Endothelial cell of umbilical vein (primary cell): ENCODE measurements at regions of chr4 and their contacts with region 1.

Region 1: DNA sequence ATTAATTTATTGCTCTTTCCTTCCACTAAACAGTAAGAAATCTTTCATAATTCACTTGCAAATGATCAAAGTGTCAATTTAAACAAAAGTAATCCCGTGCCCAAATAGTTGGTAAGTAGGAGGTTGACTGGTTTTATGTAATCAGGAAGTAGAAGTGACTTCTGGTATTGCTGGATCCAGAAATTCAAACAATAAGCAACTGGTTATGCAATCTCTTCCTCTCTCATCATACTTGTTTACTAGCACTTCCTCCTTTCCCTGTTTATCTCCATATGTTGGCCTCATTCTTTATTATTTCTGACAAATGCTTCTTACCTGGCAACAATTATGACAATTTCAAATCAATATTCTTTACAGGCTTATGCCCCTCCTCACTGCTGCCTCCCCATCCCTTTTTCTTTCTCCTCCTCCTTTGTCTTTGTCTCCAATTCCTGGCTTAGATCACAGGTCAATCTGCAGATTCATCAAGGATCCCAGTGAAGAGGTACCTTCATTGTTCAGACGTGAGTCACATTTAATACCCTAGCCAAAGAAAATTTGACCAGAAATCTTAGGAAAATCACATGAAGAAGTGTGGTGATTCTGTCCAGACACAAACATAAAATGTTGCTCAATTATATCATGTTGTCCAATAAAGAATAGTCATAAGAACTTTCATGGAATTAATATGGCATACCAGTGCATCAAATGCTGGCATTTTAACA is 323.2 kb upstream of the PCDH7 start:
- DNase-seq: peak; percentile 73
- H3K4me3 ChIP-seq: no peak overlapping the region
- H3K27ac ChIP-seq: peak overlapping the region; percentile 63
- H3K4me1 ChIP-seq: peaks cover 26% of the 10 kb centered on the region
- H3K27me3 ChIP-seq: no peaks in the 10 kb centered on the region
- CTCF ChIP-seq: no peak
- POLR2A ChIP-seq: no peak

Region 2: DNA sequence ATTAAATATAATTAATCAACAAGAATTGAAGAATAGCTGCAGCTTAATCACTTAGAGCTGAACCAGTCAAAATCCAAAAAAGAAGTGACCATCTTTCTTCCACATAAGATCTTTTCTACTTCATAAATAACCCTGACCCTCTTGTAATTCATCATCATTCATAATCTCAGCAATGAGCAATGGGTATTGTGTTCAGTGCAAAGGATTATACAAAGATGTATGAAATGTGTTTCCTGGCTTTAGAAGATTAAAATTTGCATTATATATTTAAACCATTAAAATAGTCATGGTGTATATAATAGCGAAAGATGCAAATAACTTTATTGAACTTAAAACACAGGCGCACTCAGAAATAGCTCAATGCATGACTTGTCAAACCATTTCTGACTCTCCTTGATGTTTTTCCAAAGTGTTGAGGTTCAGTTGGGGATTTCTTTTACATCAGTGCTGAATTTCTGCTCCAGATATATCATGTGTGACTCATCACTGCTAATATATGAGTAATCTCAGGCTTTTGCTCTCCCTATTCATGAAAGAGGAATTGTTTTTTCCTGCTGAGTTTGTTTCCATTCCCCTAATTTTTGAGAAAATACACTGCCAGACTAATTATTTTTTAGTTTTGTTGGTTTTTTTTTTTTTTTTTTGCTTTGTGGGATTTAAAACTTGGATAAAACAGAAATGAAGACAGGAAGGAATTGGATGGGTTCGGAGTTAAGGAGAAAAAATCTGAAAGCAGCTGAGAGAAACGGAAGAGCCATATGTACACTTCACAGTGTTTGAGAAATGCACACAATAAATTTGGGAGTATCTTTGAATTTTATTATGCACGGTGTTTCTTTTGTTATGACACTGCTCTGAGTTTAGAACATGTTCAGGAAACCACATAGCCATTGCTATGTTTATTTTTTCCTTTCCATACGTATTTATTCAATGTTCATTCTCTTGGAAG is 33.2 kb after region 1 on chr4:
- CTCF ChIA-PET with region 1: no interaction called
- POLR2A ChIA-PET with region 1: no interaction called
- dilution Hi-C with region 1: no loop called
- intact Hi-C with region 1: loop called (anchors 5 kb)
- DNase-seq: peak; percentile 83
- H3K4me3 ChIP-seq: no peak overlapping the region
- H3K27ac ChIP-seq: peak overlapping the region; percentile 36
- H3K4me1 ChIP-seq: peaks cover 22% of the 10 kb centered on the region
- H3K27me3 ChIP-seq: no peaks in the 10 kb centered on the region
- CTCF ChIP-seq: no peak
- POLR2A ChIP-seq: no peak

Region 3: GRCh38 chr4:30537456-30537855 is 140.5 kb after region 1 on chr4:
- CTCF ChIA-PET with region 1: no interaction called
- POLR2A ChIA-PET with region 1: no interaction called
- dilution Hi-C with region 1: no loop called
- intact Hi-C with region 1: loop called (anchors 5 kb)
- DNase-seq: peak; percentile 92
- H3K4me3 ChIP-seq: no peak overlapping the region
- H3K27ac ChIP-seq: peak overlapping the region; percentile 65
- H3K4me1 ChIP-seq: peaks cover 25% of the 10 kb centered on the region
- H3K27me3 ChIP-seq: no peaks in the 10 kb centered on the region
- CTCF ChIP-seq: no peak
- POLR2A ChIP-seq: no peak

Region 4: GRCh38 chr4:31655328-31655727 is 1258.4 kb after region 1 on chr4:
- CTCF ChIA-PET with region 1: no interaction called
- POLR2A ChIA-PET with region 1: no interaction called
- dilution Hi-C with region 1: no loop called
- intact Hi-C with region 1: no loop called
- DNase-seq: no peak
- H3K4me3 ChIP-seq: no peak overlapping the region
- H3K27ac ChIP-seq: no peak overlapping the region
- H3K4me1 ChIP-seq: no peaks in the 10 kb centered on the region
- H3K27me3 ChIP-seq: no peaks in the 10 kb centered on the region
- CTCF ChIP-seq: no peak
- POLR2A ChIP-seq: no peak